H1 (cell line): ENCODE measurements at regions of chr17 and their contacts with region 1.

Region 1: GRCh38 chr17:49496183-49496866 is 1.2 kb downstream of the NGFR start:
- DNase-seq: peak in 1 of 2 experiments; percentile 98
- H3K4me3 ChIP-seq: peak overlapping the region; percentile 57 to 79 (median 72)
- H3K27ac ChIP-seq: no peak overlapping the region
- H3K4me1 ChIP-seq: peaks cover 3 to 11% (median 7%) of the 10 kb centered on the region in 4 experiments
- H3K27me3 ChIP-seq: peaks cover 12 to 47% (median 38%) of the 10 kb centered on the region in 4 experiments
- CTCF ChIP-seq: peak; percentile 81 to 94 (median 85)
- EP300 ChIP-seq: peak in 1 of 2 experiments; percentile 20; a peak in 1 of 3 replicates
- POLR2A ChIP-seq: no peak
- RAD21 ChIP-seq: peak; percentile 42 to 67

Region 2: GRCh38 chr17:49456183-49456965 is 40.0 kb before region 1 on chr17:
- CTCF ChIA-PET with region 1: interaction called, 11 read pairs
- POLR2A ChIA-PET with region 1: no interaction called
- DNase-seq: no peak
- H3K4me3 ChIP-seq: no peak overlapping the region
- H3K27ac ChIP-seq: no peak overlapping the region
- H3K4me1 ChIP-seq: peaks cover 0 to 19% (median 3%) of the 10 kb centered on the region in 4 experiments; a peak in 4 of 7 replicates
- H3K27me3 ChIP-seq: peaks cover 0 to 3% (median 0%) of the 10 kb centered on the region in 4 experiments; a peak in 1 of 7 replicates
- CTCF ChIP-seq: no peak
- EP300 ChIP-seq: no peak
- POLR2A ChIP-seq: no peak
- RAD21 ChIP-seq: no peak

Region 3: GRCh38 chr17:49486012-49486641 is 10.2 kb before region 1 on chr17:
- CTCF ChIA-PET with region 1: interaction called, 30 read pairs
- POLR2A ChIA-PET with region 1: interaction called, 24 read pairs
- DNase-seq: peak; percentile 75 to 82
- H3K4me3 ChIP-seq: peak overlapping the region; percentile 1 to 46 (median 22); a peak in 5 of 8 replicates
- H3K27ac ChIP-seq: peak overlapping the region; percentile 43; the same call in 1 of the 2 replicates
- H3K4me1 ChIP-seq: peaks cover 7 to 30% (median 22%) of the 10 kb centered on the region in 4 experiments
- H3K27me3 ChIP-seq: no peaks in the 10 kb centered on the region; a peak in 2 of 7 replicates
- CTCF ChIP-seq: no peak
- EP300 ChIP-seq: no peak
- POLR2A ChIP-seq: peak in 1 of 2 experiments; percentile 80; a peak in 2 of 3 replicates
- RAD21 ChIP-seq: no peak

Region 4: DNA sequence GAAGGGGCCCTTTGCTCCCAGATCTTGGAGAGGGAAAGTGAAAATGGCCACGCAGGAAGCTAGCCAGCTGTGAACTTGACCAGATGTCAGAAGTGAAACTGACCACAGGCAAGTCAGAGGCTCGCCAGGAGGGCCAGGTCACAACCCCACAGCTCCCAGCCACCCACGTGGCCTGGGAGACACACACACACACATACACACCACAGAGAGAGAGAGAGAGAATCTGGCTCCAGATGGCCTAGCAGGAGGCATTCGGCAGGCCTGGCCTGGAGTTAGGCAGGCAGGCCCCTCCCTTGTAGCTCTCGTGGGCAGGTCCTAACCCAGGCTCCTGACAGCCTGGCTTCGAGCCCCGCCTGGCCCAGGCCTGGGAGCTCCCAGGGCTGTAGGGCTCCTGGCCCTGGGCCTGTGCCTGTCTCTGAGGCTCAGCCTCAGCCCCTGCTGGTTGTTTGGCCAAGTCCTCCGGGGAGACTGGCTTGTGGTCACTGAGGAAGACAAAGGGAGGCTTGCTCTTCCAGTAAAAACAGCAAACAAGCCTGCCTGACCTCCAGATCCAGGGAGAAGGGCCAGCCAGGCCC is 19.0 kb after region 1 on chr17:
- CTCF ChIA-PET with region 1: interaction called, 210 read pairs
- POLR2A ChIA-PET with region 1: interaction called, 5 read pairs
- DNase-seq: peak in 1 of 2 experiments; percentile 70
- H3K4me3 ChIP-seq: no peak overlapping the region
- H3K27ac ChIP-seq: no peak overlapping the region
- H3K4me1 ChIP-seq: peaks cover 16 to 41% (median 22%) of the 10 kb centered on the region in 4 experiments
- H3K27me3 ChIP-seq: no peaks in the 10 kb centered on the region
- CTCF ChIP-seq: no peak; a peak in 1 of 4 replicates
- EP300 ChIP-seq: no peak
- POLR2A ChIP-seq: no peak; a peak in 1 of 3 replicates
- RAD21 ChIP-seq: peak; percentile 7 to 33; a peak in 3 of 4 replicates

Region 5: DNA sequence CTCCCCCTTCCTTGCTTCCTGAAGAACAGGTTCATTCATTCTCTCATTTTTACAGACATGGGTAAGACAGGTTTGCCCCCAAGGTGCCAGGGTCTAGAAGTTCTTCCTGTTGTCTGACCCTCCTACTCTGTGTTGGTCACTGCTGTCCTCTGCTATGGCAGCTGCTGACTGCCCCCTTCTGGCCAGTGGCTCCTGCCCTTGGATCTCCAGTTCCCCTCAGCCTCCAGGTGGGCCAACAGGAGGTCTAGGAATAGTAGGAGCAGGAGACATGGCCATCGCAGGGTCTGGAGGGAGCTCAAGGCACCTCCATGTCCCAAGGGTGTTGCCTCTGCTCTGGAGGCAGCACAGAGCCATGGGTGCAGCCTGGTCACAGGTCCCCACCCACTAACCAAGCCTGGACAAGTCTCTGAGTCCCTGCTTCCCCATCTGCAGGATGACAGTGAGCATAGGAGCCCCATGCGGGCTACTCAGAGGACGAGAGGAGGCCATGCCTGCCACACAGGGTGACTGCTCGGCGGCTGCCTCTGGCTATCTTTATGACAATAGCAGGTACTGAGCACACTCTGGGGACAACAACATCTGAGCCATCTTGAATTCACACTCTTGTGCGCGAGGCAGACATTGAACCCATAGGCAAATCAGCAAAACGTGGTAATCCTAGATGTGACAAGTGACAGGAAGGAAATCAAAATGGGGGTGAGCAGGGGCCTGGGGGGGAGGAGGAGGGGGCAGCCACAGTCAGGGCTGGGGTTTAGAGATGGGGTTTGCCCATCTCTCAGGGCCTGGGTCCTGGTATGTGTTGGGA is 52.4 kb after region 1 on chr17:
- CTCF ChIA-PET with region 1: interaction called, 27 read pairs
- POLR2A ChIA-PET with region 1: interaction called, 3 read pairs
- DNase-seq: peak in 1 of 2 experiments; percentile 85
- H3K4me3 ChIP-seq: no peak overlapping the region
- H3K27ac ChIP-seq: no peak overlapping the region
- H3K4me1 ChIP-seq: peaks cover 0 to 26% (median 14%) of the 10 kb centered on the region in 4 experiments; a peak in 6 of 7 replicates
- H3K27me3 ChIP-seq: no peaks in the 10 kb centered on the region
- CTCF ChIP-seq: peak; percentile 93 to 96 (median 94)
- EP300 ChIP-seq: no peak
- POLR2A ChIP-seq: no peak
- RAD21 ChIP-seq: peak; percentile 91 to 95